Sciatic nerve (tissue), 2 donors: ENCODE measurements at regions of chr6 and their contacts with region 1.

Region 1: DNA sequence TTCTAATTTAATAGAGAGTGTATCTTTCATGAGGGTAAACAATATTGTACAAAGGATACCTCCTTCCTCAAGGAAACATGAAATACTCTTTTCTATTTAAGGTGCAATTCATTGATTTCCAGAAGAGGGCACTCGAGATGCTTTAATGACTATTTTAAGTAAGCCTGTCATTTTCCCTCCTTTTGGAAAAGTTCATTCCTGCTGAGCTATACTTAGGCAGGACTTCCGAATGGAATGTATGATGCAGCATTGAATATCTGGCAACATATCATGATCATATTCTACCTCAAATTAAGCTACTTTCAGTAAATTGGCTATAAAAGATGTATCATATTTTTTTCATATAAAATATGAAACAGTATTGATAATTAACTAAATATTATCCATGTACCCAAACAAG is 5.0 kb downstream of the DST start:
- DNase-seq: no peak
- ATAC-seq: peak; percentile 73

Region 2: GRCh38 chr6:56843573-56844349 is 206.1 kb after region 1 on chr6:
- intact Hi-C with region 1: loop called (anchors 10 kb)
- DNase-seq: peak; percentile 83
- ATAC-seq: peak; percentile 84

Region 3: GRCh38 chr6:56868687-56869086 is 231.0 kb after region 1 on chr6:
- intact Hi-C with region 1: no loop called
- DNase-seq: no peak
- ATAC-seq: no peak